Sciatic nerve (tissue), 2 donors: ENCODE measurements at regions of chr5 and their contacts with region 1.

Region 1: DNA sequence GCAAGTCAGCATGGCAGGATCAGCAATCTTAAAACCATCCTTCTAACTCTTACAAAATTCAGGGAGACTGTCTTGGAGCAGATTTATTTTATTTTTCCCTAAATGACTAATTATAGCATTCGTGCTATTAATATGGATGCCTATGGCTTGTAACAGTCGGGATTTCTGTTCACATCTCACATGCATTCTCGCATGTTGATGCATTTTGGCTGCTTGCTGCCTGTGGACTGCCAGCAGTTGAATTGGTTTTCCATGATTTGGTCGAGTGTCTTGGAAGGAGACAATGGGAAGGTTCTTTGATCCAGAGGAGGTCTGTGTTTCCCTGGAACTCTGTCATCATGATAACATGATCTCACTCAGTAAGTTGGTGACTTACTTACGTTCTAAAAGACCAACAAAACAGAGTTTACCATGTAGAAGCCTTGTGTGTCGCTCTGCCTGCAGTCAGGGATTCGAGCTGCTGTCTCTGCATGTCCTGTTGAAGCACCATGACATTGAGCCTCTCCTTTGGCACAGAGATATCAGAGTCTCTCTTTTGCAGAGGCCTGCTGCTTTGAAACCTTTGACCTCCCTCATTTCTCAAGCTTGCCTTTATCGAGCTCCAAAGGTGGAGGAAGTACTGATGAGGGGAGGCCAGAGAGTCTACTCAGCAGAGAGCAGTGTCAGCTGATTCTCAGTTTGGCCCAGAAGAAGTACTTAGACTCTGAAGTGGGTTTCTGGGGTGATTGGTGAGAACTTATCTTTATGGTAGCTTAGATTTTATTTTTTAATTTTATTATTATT is 82.4 kb downstream of the ARHGAP26 start:
- DNase-seq: no peak
- ATAC-seq: no peak

Region 2: DNA sequence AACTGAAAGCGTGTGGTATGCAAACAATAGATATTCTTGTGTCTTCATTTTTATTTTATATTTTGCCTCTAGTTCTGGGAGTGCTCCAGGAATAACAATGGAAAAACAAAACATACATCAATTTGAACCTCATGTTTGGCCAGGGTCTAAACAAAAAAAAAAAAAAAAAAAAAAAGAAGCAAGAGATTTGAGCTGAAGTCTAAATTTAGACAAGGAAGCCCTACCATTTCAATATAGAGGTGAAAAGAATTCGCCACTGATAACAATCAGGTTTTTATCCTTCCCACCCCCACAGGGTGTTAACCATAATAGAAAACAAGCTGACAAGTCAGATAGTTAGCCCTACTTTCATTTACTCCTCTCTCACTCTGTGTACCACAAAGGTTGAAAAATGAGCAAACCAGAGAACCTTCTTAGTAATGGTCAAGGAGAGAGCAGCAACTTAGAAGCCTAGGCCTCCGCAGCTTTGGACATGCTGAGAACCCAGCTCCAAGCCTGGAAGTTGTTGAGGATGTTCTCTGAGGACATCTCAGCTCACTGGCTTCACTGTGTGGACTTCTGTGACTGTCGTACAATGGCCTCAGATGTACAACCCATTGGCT is 841.1 kb after region 1 on chr5:
- intact Hi-C with region 1: loop called (anchors 5 kb)
- DNase-seq: no peak
- ATAC-seq: no peak